Mucosa of descending colon (tissue), 3 donors: ENCODE measurements at regions of chr6 and their contacts with region 1.

Region 1: GRCh38 chr6:12605888-12606345 is 110.7 kb upstream of the PHACTR1 start:
- DNase-seq: peak in 1 of 3 donors; percentile 85
- ATAC-seq: peak; percentile 86
- H3K4me3 ChIP-seq: no peak overlapping the region
- H3K4me1 ChIP-seq: no peaks in the 10 kb centered on the region
- CTCF ChIP-seq: no peak

Region 2: GRCh38 chr6:11653028-11653583 is 952.8 kb before region 1 on chr6:
- intact Hi-C with region 1: loop called (anchors 10 kb)
- DNase-seq: peak in 1 of 3 donors; percentile 9
- ATAC-seq: peak; percentile 34
- H3K4me3 ChIP-seq: no peak overlapping the region
- H3K4me1 ChIP-seq: peaks cover 3% of the 10 kb centered on the region
- CTCF ChIP-seq: no peak

Region 3: GRCh38 chr6:12813321-12813720 is 207.4 kb after region 1 on chr6:
- intact Hi-C with region 1: no loop called
- DNase-seq: no peak
- ATAC-seq: no peak
- H3K4me3 ChIP-seq: no peak overlapping the region
- H3K4me1 ChIP-seq: no peaks in the 10 kb centered on the region
- CTCF ChIP-seq: no peak